Activated T-helper 1 cell treated with anti-CD3 and anti-CD28 coated beads, Interleukin-12 subunit alpha, Interleukin-12 subunit beta, Interleukin-2, Interleukin-4 antibody, amounts not matched to agents 30 ng/mL and 10 ng/mL and 1 ng/mL, durations not matched to agents 14 hours and 24 hours and 36 hours (primary cell): ENCODE measurements at regions of chr19 and their contacts with region 1.

Region 1: GRCh38 chr19:11587302-11587974 is 9.8 kb upstream of the ZNF627 start:
- DNase-seq: peak; percentile 70
- H3K4me3 Mint-ChIP-seq: no peak overlapping the region
- H3K27ac Mint-ChIP-seq: peak overlapping the region; percentile 9
- H3K4me1 Mint-ChIP-seq: peaks cover 12% of the 10 kb centered on the region
- H3K27me3 Mint-ChIP-seq: peaks cover 2% of the 10 kb centered on the region

Region 2: DNA sequence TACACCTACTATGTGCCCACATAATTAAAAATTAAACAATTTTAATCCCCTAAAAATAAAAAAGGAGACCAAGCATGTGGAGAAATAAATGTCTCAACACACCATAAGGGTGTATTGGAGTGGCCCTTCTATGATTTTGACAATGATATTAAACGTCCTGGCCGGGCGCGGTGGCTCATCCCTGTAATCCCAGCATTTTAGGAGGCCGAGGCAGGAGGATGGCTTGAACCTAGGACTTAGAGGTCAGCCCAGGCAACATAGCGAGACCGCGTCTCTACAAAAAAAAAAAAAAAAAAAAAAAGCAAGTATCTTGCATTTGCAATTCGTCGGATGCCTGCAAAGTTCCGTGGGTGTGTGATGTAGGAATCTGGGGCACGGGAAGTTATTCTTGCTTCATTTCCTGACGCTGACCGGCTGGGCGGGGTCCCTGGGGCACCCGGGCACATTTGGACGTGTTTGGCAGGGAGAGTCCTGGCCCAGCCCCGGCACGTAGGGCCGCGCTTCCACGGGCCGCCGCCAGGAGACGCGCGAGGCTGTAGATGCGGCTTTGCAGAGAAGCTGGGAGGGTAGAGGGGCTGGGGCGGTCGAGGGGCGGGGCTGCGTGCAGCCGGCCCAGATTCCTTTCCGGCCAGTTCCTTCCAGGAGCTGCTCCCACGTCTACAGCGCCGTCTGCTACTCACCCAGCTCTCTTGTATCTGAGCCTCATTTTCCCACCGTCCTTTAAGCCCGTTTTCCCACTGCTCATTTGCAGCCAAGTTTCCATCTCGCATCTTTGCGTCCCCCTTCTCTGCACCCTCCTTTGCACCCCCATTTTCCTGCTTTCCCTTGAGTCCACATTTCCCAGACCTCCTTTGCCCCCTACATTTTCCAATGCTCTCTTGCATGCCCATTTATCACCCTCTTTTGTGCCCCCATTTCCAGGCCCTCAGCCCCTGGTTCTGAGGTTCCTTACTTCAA is 293.7 kb before region 1 on chr19:
- intact Hi-C with region 1: loop called (anchors 2 kb)
- DNase-seq: peak; percentile 72
- H3K4me3 Mint-ChIP-seq: peak overlapping the region; percentile 49
- H3K27ac Mint-ChIP-seq: no peak overlapping the region
- H3K4me1 Mint-ChIP-seq: peaks cover 10% of the 10 kb centered on the region
- H3K27me3 Mint-ChIP-seq: peaks cover 20% of the 10 kb centered on the region

Region 3: GRCh38 chr19:11496391-11497163 is 90.9 kb before region 1 on chr19:
- intact Hi-C with region 1: loop called (anchors 1 kb)
- DNase-seq: peak; percentile 31
- H3K4me3 Mint-ChIP-seq: no peak overlapping the region
- H3K27ac Mint-ChIP-seq: no peak overlapping the region
- H3K4me1 Mint-ChIP-seq: no peaks in the 10 kb centered on the region
- H3K27me3 Mint-ChIP-seq: no peaks in the 10 kb centered on the region

Region 4: DNA sequence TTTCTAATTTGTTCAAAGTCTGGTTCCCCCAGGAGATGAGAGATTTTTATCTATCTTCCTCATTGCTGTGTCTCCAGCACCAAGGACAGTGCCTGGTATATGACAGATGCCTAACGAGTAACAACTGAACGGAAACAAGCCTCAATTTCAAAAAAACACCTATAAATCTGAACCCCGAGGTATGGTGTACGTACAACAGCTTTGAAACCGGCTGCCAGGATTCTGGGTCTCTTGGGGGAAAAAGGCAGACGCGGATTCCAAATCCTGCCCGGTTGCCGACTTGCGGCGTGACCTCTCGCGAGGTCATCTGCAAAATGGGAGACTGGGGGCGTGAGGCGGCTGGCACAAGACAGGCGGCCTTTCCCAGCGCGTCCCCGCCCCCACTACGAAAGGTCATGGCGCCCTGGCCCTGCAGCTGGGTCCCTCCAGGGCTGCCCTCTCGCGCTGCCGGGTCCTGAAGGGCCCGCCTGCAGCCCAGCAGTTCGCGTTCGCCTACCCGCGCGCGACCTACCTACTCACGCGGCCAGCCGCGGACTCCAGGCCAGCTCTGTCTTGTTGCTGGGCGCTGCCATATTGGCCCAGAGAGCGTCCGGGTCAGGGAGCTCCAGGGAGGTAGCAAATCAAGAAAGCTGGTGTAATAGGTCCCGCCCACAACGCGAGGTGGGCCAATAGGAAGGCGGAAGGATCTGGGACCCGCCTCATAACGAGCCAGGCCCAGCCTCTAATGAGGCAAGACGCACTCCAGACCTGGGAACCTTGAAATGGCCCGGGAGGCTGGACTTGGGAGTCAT is 58.7 kb before region 1 on chr19 and contains the start of gene ECSIT:
- intact Hi-C with region 1: loop called (anchors 2 kb)
- DNase-seq: peak; percentile 89
- H3K4me3 Mint-ChIP-seq: peak within 1 kb of the TSS; percentile 95
- H3K27ac Mint-ChIP-seq: peak within 1 kb of the TSS; percentile 92
- H3K4me1 Mint-ChIP-seq: peaks cover 28% of the 10 kb centered on the region
- H3K27me3 Mint-ChIP-seq: no peaks in the 10 kb centered on the region
- total RNA-seq, gene ECSIT: 37.3 and 38.8 TPM in 2 replicates

Region 5: DNA sequence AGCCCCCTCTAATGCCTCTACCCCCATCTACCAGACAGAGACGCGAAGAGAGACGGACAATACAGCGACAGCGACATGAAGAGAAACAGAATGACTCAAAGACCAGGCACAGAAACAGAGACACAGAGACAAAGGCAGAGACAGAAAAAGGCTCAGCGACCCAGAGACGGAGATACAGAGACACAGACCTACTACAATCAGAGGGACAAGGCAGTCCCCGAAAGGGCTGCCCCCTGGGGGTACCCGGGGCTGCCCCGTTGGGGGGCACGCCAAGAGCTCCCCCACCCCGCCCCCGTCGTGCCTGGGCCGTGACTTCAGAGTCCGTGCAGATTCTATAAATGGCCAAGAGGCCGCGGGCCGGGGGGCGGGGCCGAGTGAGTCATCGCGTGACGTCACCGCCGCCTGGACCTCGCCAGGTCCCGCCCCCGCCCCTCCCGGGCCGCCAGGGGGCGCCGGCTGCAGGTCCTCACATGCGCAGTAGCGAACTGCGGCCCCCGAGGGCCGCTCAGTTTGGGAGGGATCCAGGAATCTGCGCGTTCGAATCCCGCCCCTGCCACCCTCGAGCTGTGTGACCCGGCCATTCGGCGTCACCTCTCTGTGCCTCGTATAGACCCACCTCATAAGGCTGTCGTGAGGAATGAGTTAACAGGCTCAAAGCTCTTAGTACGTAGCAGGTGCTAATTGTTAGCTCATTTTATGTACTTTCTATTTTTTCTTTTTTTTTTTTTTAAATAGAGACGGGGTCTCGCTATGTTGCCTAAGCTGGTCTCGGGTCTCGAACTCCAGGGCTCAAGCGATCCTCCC is 51.4 kb before region 1 on chr19:
- intact Hi-C with region 1: loop called (anchors 1 kb)
- DNase-seq: peak; percentile 83
- H3K4me3 Mint-ChIP-seq: peak overlapping the region; percentile 59
- H3K27ac Mint-ChIP-seq: peak overlapping the region; percentile 71
- H3K4me1 Mint-ChIP-seq: peaks cover 15% of the 10 kb centered on the region
- H3K27me3 Mint-ChIP-seq: peaks cover 12% of the 10 kb centered on the region